Left cardiac atrium (tissue), 4 donors: ENCODE measurements at regions of chr15 and their contacts with region 1.

Region 1: DNA sequence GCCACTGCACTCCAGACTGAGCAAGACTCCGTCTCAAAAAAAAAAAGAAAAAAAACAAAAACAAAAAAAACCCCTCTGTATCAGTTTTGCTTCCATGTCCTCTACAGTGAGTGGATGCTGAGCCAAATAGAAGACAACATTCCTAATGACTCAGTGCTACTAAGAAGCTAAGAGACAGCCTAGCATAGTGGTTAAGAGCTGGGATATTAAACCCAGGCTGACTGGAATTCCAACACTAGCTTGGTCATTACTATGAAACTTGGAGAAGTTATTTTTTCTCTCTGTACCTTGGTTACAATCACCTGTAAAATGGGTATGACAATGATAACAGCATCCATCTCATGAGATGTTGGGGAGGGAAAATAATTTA is 60.9 kb upstream of the PYGO1 start:
- DNase-seq: no peak
- ATAC-seq: no peak

Region 2: GRCh38 chr15:55526559-55527036 is 122.4 kb before region 1 on chr15:
- intact Hi-C with region 1: loop called in 1 of 2 experiments (anchors 5 kb)
- DNase-seq: peak; percentile 27
- ATAC-seq: peak; percentile 47 to 61

Region 3: DNA sequence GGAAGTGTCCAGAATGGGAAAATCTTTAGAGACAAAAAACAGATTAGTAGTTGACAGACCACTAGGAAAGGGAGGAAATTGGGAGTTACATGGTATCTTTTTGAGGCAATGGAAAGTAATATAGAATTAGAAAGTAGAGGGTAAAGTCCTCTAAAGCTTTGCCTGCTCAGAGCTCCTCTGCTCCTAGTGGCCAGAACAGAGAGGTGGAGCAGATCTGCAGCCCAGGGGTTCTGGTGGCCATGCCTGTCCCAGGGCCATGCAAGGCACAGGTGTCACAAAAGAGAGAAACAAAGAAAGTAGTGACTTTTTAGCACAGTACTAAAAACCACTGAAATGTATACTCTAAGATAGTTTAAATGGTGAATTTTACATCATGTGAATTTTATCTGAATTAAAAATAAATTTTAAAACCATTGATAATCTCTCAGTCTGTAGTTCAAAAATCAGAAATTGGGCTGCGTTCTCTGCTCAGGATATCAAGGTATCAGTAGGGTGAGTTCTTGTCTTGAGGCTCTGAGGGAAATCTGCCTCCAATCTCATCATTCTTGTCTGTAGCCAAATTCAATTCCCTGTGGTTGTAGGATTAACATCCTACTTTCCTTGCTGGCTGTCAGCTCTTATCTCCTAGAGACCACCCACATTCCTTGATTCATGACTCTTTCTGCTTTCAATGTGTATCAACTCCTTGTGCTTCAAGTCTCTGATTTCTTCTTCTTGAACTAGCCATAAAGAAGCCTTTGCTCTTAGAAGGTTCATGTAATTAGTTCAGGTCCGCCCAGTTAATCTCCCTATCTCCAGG is 84.5 kb before region 1 on chr15:
- intact Hi-C with region 1: no loop called
- DNase-seq: no peak
- ATAC-seq: no peak

Region 4: DNA sequence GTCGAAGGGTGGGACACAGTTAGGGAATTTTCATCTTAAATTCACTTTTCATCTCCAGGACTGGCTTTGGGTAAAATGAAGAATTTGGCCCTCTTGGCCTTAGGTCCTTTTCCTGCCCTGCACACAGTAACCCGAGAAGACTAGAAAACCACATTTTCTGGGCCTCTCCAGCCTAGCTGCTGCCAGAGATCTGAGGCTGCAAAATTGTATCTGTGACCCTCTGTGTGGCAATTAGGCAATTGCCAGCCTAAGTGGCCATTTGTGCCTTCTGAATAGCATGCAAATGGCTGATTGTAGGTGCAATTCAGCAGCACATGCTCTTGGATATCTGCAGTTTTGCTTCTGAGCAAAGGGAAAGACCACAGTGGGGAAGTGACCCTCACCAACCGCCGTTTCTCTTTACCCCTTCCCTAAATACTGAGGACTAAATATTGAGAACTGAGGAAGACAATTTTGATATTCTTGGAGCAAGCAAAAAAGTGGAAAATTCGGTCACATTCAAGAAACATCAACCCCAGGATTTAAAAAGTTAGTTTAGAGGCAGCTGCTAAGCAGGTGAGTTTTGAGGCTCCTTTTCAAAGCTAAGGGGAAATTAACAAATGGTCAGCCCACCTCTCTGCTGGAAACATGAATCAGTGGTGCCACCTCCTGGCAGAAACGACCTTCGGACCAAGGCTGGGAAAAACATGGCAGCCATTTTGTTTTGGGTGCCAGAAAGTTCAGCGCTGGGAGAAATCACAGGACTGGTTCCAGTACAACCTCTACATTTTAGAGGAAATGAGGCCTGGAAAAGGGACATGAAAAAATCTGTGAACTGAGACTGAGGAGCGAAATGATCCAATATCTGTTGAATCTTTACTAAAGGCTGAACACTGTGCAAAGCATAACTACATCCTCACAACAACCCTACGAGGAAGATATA is 150.5 kb after region 1 on chr15:
- intact Hi-C with region 1: loop called in 1 of 2 experiments (anchors 5 kb)
- DNase-seq: peak; percentile 31
- ATAC-seq: no peak

Region 5: GRCh38 chr15:55846116-55846707 is 197.2 kb after region 1 on chr15:
- intact Hi-C with region 1: loop called in 1 of 2 experiments (anchors 2 kb)
- DNase-seq: no peak
- ATAC-seq: peak in 1 of 2 donors; percentile 62

Region 6: DNA sequence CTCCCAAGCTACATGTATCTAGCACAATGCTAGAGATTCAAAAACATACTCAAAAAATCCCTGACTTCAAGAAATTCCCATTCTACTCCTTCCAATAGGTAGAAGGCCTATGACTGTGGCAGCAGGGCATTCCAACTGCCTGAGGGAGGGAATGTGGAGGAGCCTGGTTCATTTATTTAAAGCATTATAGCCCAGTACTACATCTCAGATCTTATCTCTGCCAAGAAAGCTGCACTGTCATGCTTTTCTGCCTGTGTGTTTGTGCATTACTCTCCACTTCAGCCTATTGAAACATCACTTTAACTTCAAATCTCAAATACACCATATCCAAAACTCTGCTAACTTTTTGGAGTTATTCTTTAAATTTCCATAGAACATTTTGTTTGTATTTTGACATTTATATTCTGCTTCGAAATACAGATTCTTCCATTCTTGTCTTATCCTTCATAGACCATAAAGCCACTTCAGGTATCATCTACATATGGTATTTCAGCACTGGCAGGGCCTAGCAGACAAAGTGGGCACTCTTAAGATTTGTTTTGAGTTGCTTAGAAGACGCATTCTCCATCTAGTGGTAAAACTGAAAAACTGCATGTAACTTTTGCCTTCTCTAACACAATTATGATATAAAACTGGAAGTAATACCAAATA is 403.5 kb after region 1 on chr15:
- intact Hi-C with region 1: loop called in 1 of 2 experiments (anchors 5 kb)
- DNase-seq: no peak
- ATAC-seq: peak in 1 of 2 donors; percentile 48